PC-3 (cell line): ENCODE measurements at regions of chr16 and their contacts with region 1.

Region 1: DNA sequence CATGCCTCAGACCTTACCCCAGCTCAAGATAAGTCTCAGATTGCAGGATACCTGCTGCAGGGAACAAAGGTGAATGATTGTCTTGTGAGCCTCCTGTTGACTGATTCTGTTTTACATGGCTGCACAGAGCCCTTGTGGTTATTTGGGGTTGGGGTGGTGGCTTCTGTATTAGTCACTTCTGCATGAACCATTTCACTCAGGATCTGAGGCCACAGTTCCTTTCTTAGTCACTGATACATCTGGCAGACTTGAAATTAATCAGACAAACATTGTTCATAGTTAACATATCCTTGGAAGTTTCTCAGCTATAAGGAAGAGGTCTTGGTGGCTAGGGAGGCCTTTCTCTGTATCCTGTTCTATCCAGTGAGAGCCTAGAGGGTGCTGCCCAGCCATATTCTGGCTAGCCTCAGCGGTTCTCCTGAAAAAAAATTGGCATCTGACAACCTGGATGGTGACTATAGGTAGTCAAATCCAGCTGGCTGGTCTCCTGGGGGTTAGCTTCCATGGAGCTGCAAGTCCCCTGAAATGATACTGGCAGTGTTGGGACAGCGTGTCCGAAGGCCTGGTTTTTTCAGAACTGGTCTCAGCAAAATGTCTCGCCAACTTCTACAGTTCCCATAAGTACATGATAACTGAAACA is 8.4 kb upstream of the PLK1 start:
- DNase-seq: peak; percentile 85
- ATAC-seq: peak; percentile 96
- H3K4me3 ChIP-seq: no peak overlapping the region
- H3K27ac ChIP-seq: peak overlapping the region; percentile 86
- H3K4me1 ChIP-seq: peaks cover 24% of the 10 kb centered on the region
- H3K27me3 ChIP-seq: no peaks in the 10 kb centered on the region
- CTCF ChIP-seq: no peak

Region 2: DNA sequence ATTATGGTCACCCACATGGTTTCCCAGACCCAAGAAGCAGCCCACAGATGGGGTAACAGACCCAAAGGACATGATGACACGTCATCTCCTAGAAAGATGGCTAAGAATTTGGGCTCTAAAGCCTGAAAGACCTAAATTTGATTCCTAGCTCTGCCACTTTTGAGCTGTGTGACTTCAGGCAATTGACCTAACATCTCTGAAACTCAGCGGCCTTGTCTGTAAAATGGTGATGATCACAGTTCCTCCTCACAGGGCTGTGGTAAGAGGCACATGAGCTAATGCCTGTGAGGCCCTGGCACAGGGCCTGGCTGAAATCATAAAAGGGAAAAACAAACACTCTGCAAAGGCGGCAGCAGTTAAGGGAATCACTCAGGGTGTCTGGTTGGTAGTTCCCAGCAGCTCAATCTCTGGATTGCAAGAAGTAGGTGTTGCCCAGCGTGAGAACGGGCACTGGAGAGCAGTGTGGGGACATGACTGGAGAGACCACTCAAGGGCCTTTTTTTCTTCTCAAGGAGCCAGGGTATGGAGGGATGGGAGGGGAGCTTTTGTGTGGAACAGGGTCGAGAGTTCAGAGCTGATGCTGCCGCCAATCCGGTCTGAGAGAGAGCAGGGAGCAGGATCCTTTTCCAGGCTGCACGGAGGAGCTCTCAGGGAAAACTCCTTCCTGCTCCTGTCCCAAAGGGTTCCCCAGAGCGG is 353.1 kb before region 1 on chr16:
- CTCF ChIA-PET with region 1: no interaction called
- POLR2A ChIA-PET with region 1: no interaction called
- intact Hi-C with region 1: no loop called
- DNase-seq: peak; percentile 34
- ATAC-seq: peak; percentile 90
- H3K4me3 ChIP-seq: no peak overlapping the region
- H3K27ac ChIP-seq: no peak overlapping the region
- H3K4me1 ChIP-seq: no peaks in the 10 kb centered on the region
- H3K27me3 ChIP-seq: no peaks in the 10 kb centered on the region
- CTCF ChIP-seq: no peak

Region 3: DNA sequence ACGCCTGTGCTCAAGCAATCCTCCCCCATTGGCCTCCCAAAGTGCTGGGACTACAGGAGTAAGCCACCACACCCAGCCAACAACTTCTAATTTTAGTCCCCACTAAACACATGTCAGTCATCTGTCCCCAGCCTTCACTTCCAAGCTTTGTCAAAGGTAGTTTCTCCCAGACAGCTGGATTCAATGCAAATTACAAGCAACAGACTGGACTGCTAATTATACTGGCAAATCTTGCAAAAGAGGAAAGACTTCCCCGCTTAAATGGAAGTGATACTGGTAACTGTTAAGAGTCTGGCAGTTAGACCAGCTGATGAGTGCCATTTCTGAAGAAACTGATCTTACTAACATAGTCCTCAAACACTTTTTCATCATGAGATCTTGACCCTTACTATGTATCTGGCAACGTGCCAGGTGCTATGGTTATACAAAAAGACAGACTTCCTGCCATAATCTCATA is 151.8 kb before region 1 on chr16:
- CTCF ChIA-PET with region 1: no interaction called
- POLR2A ChIA-PET with region 1: no interaction called
- intact Hi-C with region 1: no loop called
- DNase-seq: peak; percentile 40
- ATAC-seq: peak; percentile 64
- H3K4me3 ChIP-seq: no peak overlapping the region
- H3K27ac ChIP-seq: no peak overlapping the region
- H3K4me1 ChIP-seq: peaks cover 8% of the 10 kb centered on the region
- H3K27me3 ChIP-seq: no peaks in the 10 kb centered on the region
- CTCF ChIP-seq: no peak

Region 4: DNA sequence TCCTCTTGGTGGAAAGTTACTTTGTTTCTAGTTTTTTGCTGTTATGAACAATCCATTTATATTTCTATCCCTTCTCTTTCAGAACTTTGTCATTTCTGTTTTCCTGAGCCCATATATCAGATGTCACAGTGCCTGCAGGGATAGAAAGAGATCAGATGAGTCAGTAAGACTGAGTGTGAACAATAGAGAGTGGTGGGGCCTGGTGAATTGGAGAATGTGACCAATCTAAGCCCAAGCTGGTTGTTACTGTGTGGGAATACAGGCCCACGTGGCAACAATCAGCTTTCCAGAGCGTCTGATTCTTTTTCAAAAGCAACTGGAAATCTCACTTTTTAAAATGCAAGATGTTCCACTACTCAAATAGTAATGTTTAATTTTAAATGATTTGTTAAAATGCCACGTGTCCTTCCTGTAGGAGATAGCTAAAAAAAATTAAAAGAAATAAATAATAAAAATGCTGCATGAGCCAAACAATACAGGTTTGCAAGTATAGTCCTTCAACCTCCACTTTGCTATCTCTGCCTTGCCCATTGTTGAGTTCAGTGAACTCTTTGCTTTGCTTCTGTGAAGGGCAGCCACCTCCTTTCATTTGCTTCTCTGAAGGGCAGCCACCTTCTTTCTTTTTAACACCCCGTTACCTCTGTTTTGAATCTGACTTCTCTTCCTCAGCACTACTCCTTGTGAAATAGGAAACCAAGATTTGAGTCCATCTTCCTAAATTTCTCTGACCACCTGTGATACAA is 19.4 kb before region 1 on chr16:
- CTCF ChIA-PET with region 1: no interaction called
- POLR2A ChIA-PET with region 1: interaction called, 23 read pairs
- intact Hi-C with region 1: no loop called
- DNase-seq: peak; percentile 35
- ATAC-seq: no peak; the same call in 1 of the 2 replicates
- H3K4me3 ChIP-seq: no peak overlapping the region
- H3K27ac ChIP-seq: no peak overlapping the region
- H3K4me1 ChIP-seq: no peaks in the 10 kb centered on the region
- H3K27me3 ChIP-seq: no peaks in the 10 kb centered on the region
- CTCF ChIP-seq: no peak

Region 5: GRCh38 chr16:23729503-23730424 is 59.5 kb after region 1 on chr16:
- CTCF ChIA-PET with region 1: interaction called, 3 read pairs
- POLR2A ChIA-PET with region 1: no interaction called
- intact Hi-C with region 1: loop called (anchors 5 kb)
- DNase-seq: peak; percentile 35
- ATAC-seq: no peak
- H3K4me3 ChIP-seq: no peak overlapping the region
- H3K27ac ChIP-seq: no peak overlapping the region
- H3K4me1 ChIP-seq: no peaks in the 10 kb centered on the region
- H3K27me3 ChIP-seq: no peaks in the 10 kb centered on the region
- CTCF ChIP-seq: no peak

Region 6: GRCh38 chr16:23835390-23836077 is 165.3 kb after region 1 on chr16 and contains the start of gene PRKCB:
- CTCF ChIA-PET with region 1: no interaction called
- POLR2A ChIA-PET with region 1: no interaction called
- intact Hi-C with region 1: no loop called
- DNase-seq: no peak
- ATAC-seq: no peak
- H3K4me3 ChIP-seq: no peak within 1 kb of the TSS
- H3K27ac ChIP-seq: no peak within 1 kb of the TSS
- H3K4me1 ChIP-seq: no peaks in the 10 kb centered on the region
- H3K27me3 ChIP-seq: peaks cover 29% of the 10 kb centered on the region
- CTCF ChIP-seq: no peak
- total RNA-seq, gene PRKCB: not detected in 2 replicates